Activated CD4-positive, alpha-beta memory T cell treated with anti-CD3 and anti-CD28 coated beads for 36 hours (primary cell): ENCODE measurements at regions of chr9 and their contacts with region 1.

Region 1: DNA sequence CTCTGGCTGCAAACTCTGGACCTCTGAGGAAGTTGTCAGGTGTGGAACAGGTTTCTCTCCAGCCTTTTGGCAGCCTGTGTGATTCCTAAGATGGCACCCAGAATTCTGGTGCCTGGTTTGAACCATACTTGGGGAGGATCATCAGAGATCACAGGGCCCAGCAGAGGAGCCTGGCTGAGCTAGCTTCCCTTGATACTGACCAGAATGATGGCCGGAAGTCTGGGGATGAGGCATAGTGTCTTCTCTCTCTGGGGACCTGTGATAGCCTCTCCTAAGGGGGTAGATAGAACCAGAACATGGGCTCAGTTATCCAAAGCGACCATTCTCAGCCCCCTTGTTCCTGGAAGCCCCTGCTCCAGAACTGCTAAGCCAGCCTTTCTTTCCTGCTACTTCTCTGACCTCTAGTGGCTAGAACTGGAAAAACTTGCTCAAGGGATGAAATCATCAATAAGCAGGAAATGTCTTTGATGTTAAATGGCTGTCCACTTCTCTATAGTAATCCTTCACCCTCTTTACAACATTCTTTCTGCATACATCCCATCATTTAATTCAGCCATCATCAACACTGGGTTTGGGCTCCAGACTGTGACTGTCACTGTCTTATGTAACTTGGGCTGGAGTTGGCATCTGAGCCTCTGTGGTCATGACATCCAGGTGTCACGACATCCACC is 55.1 kb downstream of the C9orf152 start:
- DNase-seq: no peak
- H3K4me3 Mint-ChIP-seq: no peak overlapping the region
- H3K27ac Mint-ChIP-seq: no peak overlapping the region
- H3K4me1 Mint-ChIP-seq: peaks cover 56% of the 10 kb centered on the region
- H3K27me3 Mint-ChIP-seq: no peaks in the 10 kb centered on the region

Region 2: DNA sequence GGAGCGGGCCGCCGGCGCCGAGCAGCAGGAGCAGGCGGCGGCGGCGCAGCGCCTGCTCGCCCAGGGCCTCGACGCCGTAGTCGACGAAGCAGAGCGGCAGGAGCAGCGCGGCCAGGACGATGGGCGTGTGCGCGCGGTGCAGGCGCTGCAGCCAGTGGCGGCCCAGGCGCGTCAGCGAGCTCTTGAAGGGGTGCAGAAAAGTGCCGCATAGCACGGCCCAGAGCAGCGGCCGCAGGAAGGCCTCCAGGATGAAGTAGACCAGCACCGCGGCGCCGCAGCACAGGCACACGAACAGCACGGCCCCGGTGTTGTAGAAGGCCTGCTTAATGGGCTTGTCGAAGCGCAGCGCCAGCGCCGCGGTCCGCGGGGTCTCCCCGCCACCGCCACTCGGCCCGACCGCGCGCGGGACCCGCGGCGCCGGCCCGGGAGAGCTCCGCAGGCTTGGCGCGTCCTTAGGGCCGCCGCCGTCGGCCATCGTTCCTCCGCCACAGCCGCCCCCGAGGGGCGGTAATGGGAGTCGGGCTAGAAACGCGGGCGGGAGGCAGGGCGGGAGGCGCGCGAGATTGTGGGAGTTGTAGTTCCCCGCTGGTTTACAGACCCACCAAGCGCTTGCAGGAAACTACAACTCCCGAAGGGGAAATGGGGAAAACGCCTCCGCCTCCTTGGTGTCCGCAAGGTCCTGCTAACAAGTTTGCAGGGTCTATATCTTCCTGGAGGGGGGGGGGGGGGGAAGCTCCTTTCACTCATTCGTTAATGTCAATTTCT is 1033.2 kb before region 1 on chr9 and contains the start of gene TMEM245:
- CTCF ChIA-PET with region 1: no interaction called
- POLR2A ChIA-PET with region 1: no interaction called
- intact Hi-C with region 1: loop called (anchors 5 kb)
- DNase-seq: peak; percentile 97
- H3K4me3 Mint-ChIP-seq: peak within 1 kb of the TSS; percentile 88
- H3K27ac Mint-ChIP-seq: peak within 1 kb of the TSS; percentile 86
- H3K4me1 Mint-ChIP-seq: peaks cover 38% of the 10 kb centered on the region
- H3K27me3 Mint-ChIP-seq: no peaks in the 10 kb centered on the region
- total RNA-seq, gene TMEM245: 23.0 TPM

Region 3: DNA sequence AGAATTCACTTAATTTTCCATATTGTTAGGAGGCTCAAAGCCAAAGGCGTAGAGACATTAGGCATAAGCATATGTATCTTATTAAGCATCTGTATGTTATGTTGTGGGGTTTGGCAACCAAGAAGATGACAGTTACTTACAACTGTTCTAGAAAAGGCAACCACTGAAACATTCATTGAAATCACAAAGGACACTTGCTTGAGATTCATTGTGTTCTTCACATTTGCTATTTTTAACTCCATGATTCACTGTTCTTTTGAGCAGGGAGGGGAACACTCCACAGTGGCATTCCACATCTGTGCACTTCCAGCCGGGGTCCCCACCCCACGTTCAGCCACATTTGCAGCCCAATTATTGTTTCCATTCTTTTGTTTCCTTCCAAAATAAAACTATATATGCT is 265.8 kb before region 1 on chr9:
- CTCF ChIA-PET with region 1: interaction called, 11 read pairs
- POLR2A ChIA-PET with region 1: interaction called, 6 read pairs
- intact Hi-C with region 1: loop called (anchors 1 kb)
- DNase-seq: no peak
- H3K4me3 Mint-ChIP-seq: no peak overlapping the region
- H3K27ac Mint-ChIP-seq: peak overlapping the region; percentile 84
- H3K4me1 Mint-ChIP-seq: peaks cover 50% of the 10 kb centered on the region
- H3K27me3 Mint-ChIP-seq: peaks cover 1% of the 10 kb centered on the region

Region 4: DNA sequence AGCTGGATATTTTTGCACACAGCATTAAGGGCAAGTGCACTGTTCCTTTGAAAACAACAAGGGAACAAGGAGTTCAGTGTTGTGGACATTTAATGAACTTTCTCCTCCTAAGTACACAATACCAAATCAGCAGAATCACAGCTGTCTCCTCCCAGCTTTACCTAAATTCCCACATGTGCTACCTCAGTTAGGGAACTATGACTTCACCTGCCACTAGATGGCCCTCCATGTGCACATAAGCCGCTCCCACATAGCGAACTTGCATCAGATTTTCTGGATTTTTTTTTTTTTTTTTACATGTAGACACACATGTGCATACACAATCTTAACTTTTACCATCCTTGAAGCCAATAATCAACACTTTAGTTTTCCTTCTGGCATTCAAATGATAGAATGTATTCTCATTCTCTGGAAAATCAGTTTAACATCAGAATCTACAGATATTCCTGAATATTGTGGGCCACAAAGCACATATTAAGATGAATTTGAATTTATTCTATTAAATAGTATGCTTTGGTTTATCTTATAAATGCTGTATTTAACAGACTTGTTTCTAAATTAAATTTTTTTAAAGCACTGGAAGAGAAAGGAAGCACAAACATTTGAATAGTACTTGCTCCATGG is 249.2 kb before region 1 on chr9:
- CTCF ChIA-PET with region 1: interaction called, 95 read pairs
- POLR2A ChIA-PET with region 1: no interaction called
- intact Hi-C with region 1: loop called (anchors 1 kb)
- DNase-seq: peak; percentile 74
- H3K4me3 Mint-ChIP-seq: no peak overlapping the region
- H3K27ac Mint-ChIP-seq: no peak overlapping the region
- H3K4me1 Mint-ChIP-seq: peaks cover 10% of the 10 kb centered on the region
- H3K27me3 Mint-ChIP-seq: peaks cover 6% of the 10 kb centered on the region

Region 5: DNA sequence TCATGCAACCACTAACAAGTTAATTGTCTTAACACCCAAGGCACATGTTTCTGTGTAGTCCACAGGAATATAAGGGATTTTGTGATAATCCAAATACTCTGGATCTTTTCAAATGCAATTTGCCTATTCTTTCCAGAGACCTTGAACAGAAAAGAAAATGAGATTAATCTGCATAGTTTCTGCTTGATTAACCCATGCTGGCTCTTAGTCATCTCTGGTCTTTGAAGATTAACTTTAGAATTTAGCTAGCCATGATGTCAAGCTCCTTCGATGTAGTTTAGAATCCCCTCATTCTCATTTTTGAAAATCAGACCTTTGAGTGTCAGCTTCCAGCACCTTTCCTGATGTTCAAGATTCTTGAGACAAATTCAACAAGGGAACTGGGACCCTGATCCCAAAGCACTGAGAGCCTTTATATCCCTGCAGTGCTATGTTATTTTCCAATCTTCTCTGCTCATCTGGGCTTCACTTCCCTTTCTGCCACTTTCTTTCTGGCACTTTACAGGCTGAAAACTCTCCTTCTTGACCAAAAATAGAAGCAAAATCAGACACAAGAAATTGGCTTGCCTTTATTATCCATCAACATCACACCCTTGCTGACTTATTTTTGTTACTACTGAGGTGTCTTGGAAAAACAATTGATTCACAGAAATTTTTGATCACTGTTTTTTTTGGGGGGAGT is 217.3 kb before region 1 on chr9:
- CTCF ChIA-PET with region 1: interaction called, 5 read pairs
- POLR2A ChIA-PET with region 1: interaction called, 8 read pairs
- intact Hi-C with region 1: loop called (anchors 1 kb)
- DNase-seq: no peak
- H3K4me3 Mint-ChIP-seq: no peak overlapping the region
- H3K27ac Mint-ChIP-seq: peak overlapping the region; percentile 81
- H3K4me1 Mint-ChIP-seq: peaks cover 31% of the 10 kb centered on the region
- H3K27me3 Mint-ChIP-seq: peaks cover 5% of the 10 kb centered on the region

Region 6: DNA sequence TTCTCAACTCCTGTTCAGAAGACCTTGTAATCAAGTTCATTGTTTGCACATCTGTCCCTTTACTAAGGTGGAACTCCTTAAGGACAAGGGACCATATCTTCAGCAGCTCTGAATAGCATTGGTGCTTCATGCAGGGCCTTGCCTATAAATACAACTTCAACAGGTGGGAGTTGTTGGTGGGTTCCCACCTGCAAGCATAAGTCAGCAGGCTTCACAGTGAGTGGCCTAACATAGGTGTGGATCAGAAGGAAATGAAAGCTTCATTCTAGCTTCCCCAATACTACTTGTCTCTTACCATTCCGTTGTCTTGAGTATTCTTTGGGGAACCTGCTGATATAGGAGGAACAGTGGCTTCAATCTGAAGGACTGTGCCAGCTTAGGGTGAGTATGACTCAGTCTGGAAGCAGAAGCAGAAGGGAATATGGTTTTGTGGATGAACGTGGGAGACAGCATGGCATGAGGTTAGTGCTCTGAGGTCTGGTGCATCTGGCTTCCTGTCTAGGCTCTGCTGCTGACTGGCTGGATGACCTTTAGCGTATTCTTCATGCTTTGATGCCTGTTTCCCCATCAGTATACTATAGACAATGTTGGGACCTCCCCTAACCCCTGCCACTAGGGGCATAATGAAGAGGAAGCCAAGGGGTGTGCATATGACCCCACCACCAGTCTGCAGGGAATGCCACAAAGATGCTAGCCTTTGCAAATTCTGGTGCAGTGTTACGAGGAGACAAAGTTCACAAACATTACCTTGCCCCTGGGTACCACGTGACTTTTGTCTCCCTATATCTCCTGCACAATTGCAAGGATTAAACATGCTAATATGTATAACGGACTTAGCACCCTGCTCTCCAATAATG is 180.6 kb before region 1 on chr9:
- CTCF ChIA-PET with region 1: interaction called, 3 read pairs
- POLR2A ChIA-PET with region 1: interaction called, 3 read pairs
- intact Hi-C with region 1: loop called (anchors 1 kb)
- DNase-seq: peak; percentile 42
- H3K4me3 Mint-ChIP-seq: no peak overlapping the region
- H3K27ac Mint-ChIP-seq: no peak overlapping the region
- H3K4me1 Mint-ChIP-seq: peaks cover 79% of the 10 kb centered on the region
- H3K27me3 Mint-ChIP-seq: no peaks in the 10 kb centered on the region